GM12878 (cell line): ENCODE measurements at regions of chr20 and their contacts with region 1.

Region 1: GRCh38 chr20:49344975-49345374 is 67.1 kb upstream of the ZNFX1 start:
- DNase-seq: no peak
- ATAC-seq: no peak
- H3K4me3 ChIP-seq: no peak overlapping the region
- H3K27ac ChIP-seq: no peak overlapping the region
- H3K4me1 ChIP-seq: no peaks in the 10 kb centered on the region
- H3K27me3 ChIP-seq: peaks cover 0 to under 1% of the 10 kb centered on the region in 2 experiments; a peak in 1 of 4 replicates
- CTCF ChIP-seq: no peak
- EP300 ChIP-seq: no peak
- POLR2A ChIP-seq: no peak
- RAD21 ChIP-seq: no peak

Region 2: DNA sequence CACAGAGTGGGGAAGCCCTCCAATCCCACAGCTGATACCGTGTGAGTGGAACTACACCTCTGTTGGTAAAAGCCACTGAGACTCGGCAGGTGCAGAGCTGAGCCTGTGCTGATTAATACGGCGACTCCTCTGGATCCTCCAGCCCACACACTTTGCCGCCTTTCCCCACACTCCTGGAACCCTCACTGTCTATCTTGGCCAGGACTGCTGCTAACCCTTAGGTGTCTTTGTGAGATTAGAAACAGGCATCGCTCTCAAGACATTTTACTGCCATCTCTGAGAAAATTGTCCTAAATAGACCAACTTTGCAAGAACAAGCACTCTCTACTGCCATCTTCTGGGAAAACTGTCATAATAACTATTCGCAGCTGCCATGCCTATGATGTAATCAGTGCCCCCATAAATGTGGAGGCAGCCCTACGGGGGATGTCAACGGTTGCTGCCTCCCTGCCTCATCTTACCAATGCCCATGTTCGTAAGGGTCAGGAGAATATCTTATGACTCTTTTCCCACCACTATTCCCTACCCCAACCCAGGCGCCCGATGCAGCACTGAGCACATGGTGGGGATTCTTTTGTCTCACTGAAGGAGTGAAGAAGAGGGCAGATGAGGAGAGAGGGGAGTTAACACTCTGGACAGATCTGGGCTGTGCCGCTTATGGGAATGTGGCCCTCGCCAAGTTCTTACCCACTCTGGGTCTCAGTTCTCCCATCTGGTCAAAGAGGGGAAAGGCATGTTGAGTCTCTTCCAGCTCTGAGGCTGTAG is 163.6 kb after region 1 on chr20:
- CTCF ChIA-PET with region 1: interaction called, 3 read pairs
- POLR2A ChIA-PET with region 1: no interaction called
- RAD21 ChIA-PET with region 1: no interaction called
- SMC1A ChIA-PET with region 1: no interaction called
- in situ Hi-C with region 1: loop called (anchors 25 kb)
- intact Hi-C with region 1: no loop called
- DNase-seq: peak; percentile 7
- ATAC-seq: peak; percentile 81
- H3K4me3 ChIP-seq: no peak overlapping the region
- H3K27ac ChIP-seq: no peak overlapping the region
- H3K4me1 ChIP-seq: no peaks in the 10 kb centered on the region
- H3K27me3 ChIP-seq: peaks cover 4% of the 10 kb centered on the region in 2 experiments; a peak in 2 of 4 replicates
- CTCF ChIP-seq: peak; percentile 45 to 55 (median 53); a peak in 5 of 6 replicates
- EP300 ChIP-seq: no peak
- POLR2A ChIP-seq: no peak
- RAD21 ChIP-seq: peak; percentile 44

Region 3: GRCh38 chr20:49534255-49534712 is 189.3 kb after region 1 on chr20:
- CTCF ChIA-PET with region 1: interaction called, 3 read pairs
- POLR2A ChIA-PET with region 1: no interaction called
- RAD21 ChIA-PET with region 1: no interaction called
- SMC1A ChIA-PET with region 1: no interaction called
- in situ Hi-C with region 1: no loop called
- intact Hi-C with region 1: loop called (anchors 5 kb)
- DNase-seq: peak; percentile 19
- ATAC-seq: peak; percentile 91
- H3K4me3 ChIP-seq: no peak overlapping the region
- H3K27ac ChIP-seq: no peak overlapping the region
- H3K4me1 ChIP-seq: peaks cover 15% of the 10 kb centered on the region
- H3K27me3 ChIP-seq: no peaks in the 10 kb centered on the region
- CTCF ChIP-seq: peak; percentile 74 to 80 (median 76); a peak in 5 of 6 replicates
- EP300 ChIP-seq: no peak
- POLR2A ChIP-seq: no peak
- RAD21 ChIP-seq: peak; percentile 65

Region 4: GRCh38 chr20:49853640-49854039 is 508.7 kb after region 1 on chr20:
- CTCF ChIA-PET with region 1: no interaction called
- POLR2A ChIA-PET with region 1: no interaction called
- RAD21 ChIA-PET with region 1: no interaction called
- SMC1A ChIA-PET with region 1: no interaction called
- in situ Hi-C with region 1: loop called (anchors 25 kb)
- intact Hi-C with region 1: no loop called
- DNase-seq: no peak
- ATAC-seq: no peak
- H3K4me3 ChIP-seq: no peak overlapping the region
- H3K27ac ChIP-seq: no peak overlapping the region
- H3K4me1 ChIP-seq: no peaks in the 10 kb centered on the region
- H3K27me3 ChIP-seq: no peaks in the 10 kb centered on the region
- CTCF ChIP-seq: no peak
- EP300 ChIP-seq: no peak
- POLR2A ChIP-seq: no peak
- RAD21 ChIP-seq: no peak